ENCODE measurements at regions of chr3 and their contacts with region 1.

Region 1: GRCh38 chr3:181176601-181177000 is 187.1 kb upstream of the DNAJC19 start:
- DNase-seq: peak; percentile 41
- ATAC-seq: peak; percentile 60; the same call in 2 of the 3 replicates
- H3K4me3 ChIP-seq: no peak overlapping the region
- H3K27ac ChIP-seq: no peak overlapping the region
- H3K4me1 ChIP-seq: no peaks in the 10 kb centered on the region
- H3K27me3 ChIP-seq: no peaks in the 10 kb centered on the region
- CTCF ChIP-seq: peak; percentile 70
- EP300 ChIP-seq: no peak
- POLR2A ChIP-seq: no peak
- RAD21 ChIP-seq: no peak

Region 2: DNA sequence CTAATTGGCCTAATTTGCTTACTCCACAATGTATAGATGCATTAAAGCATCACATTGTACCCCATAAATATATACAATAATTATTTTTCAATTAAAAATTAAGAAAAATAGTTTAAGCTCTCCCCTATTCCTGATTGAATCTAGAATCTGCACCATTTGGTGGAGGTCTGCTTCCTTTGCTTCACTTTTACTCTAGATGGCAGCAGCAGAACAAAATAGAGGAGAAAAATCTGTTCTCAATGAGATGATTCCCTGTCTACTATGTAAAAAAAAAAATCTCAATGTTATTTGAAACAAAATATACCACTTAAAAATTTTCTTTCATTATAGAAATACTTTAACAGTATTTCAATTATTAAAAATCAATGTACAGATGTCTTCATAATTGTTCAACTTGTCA is 373.8 kb before region 1 on chr3:
- CTCF ChIA-PET with region 1: interaction called, 10 read pairs
- POLR2A ChIA-PET with region 1: no interaction called
- in situ Hi-C with region 1: loop called (anchors 10 kb)
- intact Hi-C with region 1: loop called (anchors 1 kb)
- DNase-seq: peak; percentile 28
- ATAC-seq: peak; percentile 58; the same call in 2 of the 3 replicates
- H3K4me3 ChIP-seq: no peak overlapping the region
- H3K27ac ChIP-seq: no peak overlapping the region
- H3K4me1 ChIP-seq: no peaks in the 10 kb centered on the region
- H3K27me3 ChIP-seq: no peaks in the 10 kb centered on the region
- CTCF ChIP-seq: peak; percentile 59
- EP300 ChIP-seq: no peak
- POLR2A ChIP-seq: no peak
- RAD21 ChIP-seq: peak; percentile 22; the same call in 1 of the 2 replicates

Region 3: GRCh38 chr3:180934638-180935037 is 242.0 kb before region 1 on chr3:
- CTCF ChIA-PET with region 1: no interaction called
- POLR2A ChIA-PET with region 1: no interaction called
- in situ Hi-C with region 1: no loop called
- intact Hi-C with region 1: no loop called
- DNase-seq: no peak
- ATAC-seq: no peak
- H3K4me3 ChIP-seq: no peak overlapping the region
- H3K27ac ChIP-seq: no peak overlapping the region
- H3K4me1 ChIP-seq: no peaks in the 10 kb centered on the region
- H3K27me3 ChIP-seq: no peaks in the 10 kb centered on the region; a peak in 1 of 5 replicates
- CTCF ChIP-seq: no peak
- EP300 ChIP-seq: no peak
- POLR2A ChIP-seq: no peak
- RAD21 ChIP-seq: no peak

Region 4: GRCh38 chr3:180989291-180990163 is 187.1 kb before region 1 on chr3 and contains the start of gene DNAJC19:
- CTCF ChIA-PET with region 1: no interaction called
- POLR2A ChIA-PET with region 1: no interaction called
- in situ Hi-C with region 1: no loop called
- intact Hi-C with region 1: loop called (anchors 10 kb)
- DNase-seq: peak; percentile 96
- ATAC-seq: peak; percentile 99
- H3K4me3 ChIP-seq: peak within 1 kb of the TSS; percentile 87 to 97 (median 92)
- H3K27ac ChIP-seq: peak within 1 kb of the TSS; percentile 94
- H3K4me1 ChIP-seq: peaks cover 27% of the 10 kb centered on the region
- H3K27me3 ChIP-seq: peaks cover 0 to 2% of the 10 kb centered on the region in 2 experiments; a peak in 1 of 5 replicates
- CTCF ChIP-seq: peak; percentile 29; the same call in 1 of the 2 replicates
- EP300 ChIP-seq: peak in 1 of 2 experiments; percentile 34; a peak in 2 of 4 replicates
- POLR2A ChIP-seq: peak; percentile 89 to 91
- RAD21 ChIP-seq: no peak; the same call in 1 of the 2 replicates
- total RNA-seq, gene DNAJC19: 68.8 and 75.8 TPM in 2 replicates